ENCODE measurements at regions of chr6 and their contacts with region 1.

Region 1: GRCh38 chr6:144013486-144013909 is 5.4 kb upstream of the PLAGL1 start:
- DNase-seq: no peak
- H3K4me3 ChIP-seq: no peak overlapping the region
- H3K27me3 ChIP-seq: no peaks in the 10 kb centered on the region; the same call in 1 of the 2 replicates
- CTCF ChIP-seq: peak; percentile 84

Region 2: DNA sequence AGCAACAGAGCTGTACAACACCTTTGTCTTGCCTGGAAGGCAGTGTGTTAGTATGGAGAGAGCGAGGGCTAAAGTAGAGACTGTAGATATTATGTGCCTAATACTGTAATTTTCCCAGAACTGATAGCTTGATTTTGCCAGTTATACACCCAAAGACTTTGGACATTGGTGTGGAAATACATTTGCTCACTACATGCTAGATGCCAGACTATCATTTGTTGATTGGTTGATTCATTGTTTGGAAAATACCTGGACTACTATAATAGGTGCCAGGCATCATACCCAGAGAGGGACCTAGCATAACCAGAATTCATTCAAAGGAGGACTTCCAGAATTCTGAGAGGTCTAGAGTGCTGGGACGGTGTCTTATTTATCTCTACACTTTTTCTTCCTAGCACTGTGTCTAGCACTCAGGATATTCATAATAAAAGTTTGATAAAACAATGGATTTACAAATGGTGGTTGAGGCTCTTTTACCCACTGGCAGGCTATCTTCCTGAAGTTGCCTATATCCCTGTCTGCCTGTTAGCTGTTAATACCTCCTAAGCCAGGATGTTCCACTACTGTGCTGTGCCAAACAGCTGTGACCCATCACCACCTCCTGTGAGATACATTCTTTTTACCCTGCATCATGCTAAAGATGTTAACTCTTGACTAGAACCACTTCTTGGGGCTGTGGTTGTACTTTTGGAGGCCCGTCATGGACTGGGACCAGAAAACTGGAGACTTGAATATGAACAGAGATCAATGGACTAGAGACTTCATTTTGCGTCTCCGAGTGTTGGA is 429.8 kb before region 1 on chr6:
- CTCF ChIA-PET with region 1: interaction called, 12 read pairs
- POLR2A ChIA-PET with region 1: no interaction called
- DNase-seq: no peak
- H3K4me3 ChIP-seq: no peak overlapping the region
- H3K27me3 ChIP-seq: no peaks in the 10 kb centered on the region
- CTCF ChIP-seq: no peak

Region 3: GRCh38 chr6:144033816-144034735 is 20.6 kb after region 1 on chr6:
- CTCF ChIA-PET with region 1: interaction called, 12 read pairs
- POLR2A ChIA-PET with region 1: no interaction called
- DNase-seq: peak; percentile 76
- H3K4me3 ChIP-seq: no peak overlapping the region
- H3K27me3 ChIP-seq: no peaks in the 10 kb centered on the region
- CTCF ChIP-seq: no peak

Measured in BJ (cell line).